Mucosa of descending colon (tissue), 3 donors: ENCODE measurements at regions of chr6 and their contacts with region 1.

Region 1: DNA sequence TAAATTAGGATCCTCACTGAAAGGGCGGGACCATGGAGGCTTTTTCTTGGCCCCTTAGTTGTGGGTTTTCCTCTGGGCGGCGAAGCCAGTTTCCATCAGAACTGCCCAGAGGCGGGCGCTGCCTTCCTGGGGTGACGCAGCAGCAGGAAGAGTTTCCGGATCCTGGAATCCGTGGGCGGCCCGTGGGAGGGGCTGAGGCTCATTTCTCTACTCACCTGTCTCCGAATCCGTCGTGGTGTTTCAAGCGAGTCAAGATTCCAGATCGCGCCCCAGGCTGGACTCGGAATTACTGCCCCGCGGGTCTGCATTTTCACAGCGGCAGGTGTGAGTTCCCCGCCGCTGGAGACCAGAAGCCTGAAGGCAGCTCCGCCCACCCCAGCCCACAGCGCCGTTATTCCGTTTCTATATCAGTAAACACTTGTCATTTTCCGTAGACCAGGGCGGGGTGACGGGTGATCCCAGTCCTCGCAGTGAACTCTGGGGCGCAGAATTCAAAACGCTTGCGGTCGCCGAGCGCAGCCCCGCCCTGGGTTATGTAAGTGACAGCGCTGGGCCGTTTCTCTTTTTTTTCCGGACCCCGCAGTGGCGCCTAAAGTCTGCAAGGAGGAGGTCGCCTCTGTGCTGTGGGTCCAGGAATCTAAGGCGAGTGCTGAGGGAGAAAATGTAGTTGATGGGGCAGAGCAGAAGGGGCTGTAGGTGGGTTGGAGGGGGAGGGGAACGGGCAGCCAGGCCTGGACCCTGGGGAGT is 27.2 kb upstream of the POU5F1 start:
- DNase-seq: peak; percentile 92 to 97 (median 97)
- ATAC-seq: peak; percentile 85
- H3K4me3 ChIP-seq: peak overlapping the region; percentile 40
- H3K4me1 ChIP-seq: peaks cover 23% of the 10 kb centered on the region
- CTCF ChIP-seq: no peak

Region 2: DNA sequence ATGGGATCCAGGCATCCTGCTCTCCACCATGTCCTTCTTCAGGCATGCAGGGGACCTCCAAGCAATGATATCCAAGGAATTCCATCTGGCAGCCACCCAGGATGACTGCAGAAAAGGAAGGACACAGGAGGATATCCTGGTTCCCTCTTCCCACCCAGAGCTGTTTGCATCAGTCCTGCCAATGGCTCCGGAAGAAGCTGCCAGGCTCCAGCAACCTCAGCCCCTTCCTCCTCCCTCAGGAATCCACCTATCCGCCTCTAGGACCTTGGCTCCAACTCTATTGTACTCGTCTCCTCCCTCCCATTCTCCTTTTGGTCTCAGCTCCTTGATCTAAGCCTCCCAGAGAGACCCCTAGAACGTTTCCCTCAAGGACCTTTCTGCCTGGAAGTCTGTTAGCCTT is 58.1 kb before region 1 on chr6:
- intact Hi-C with region 1: loop called (anchors 5 kb)
- DNase-seq: no peak
- ATAC-seq: no peak
- H3K4me3 ChIP-seq: no peak overlapping the region
- H3K4me1 ChIP-seq: peaks cover 23% of the 10 kb centered on the region
- CTCF ChIP-seq: no peak

Region 3: GRCh38 chr6:31441365-31442267 is 243.9 kb after region 1 on chr6:
- intact Hi-C with region 1: no loop called
- DNase-seq: peak; percentile 75 to 93 (median 87)
- ATAC-seq: peak; percentile 96
- H3K4me3 ChIP-seq: no peak overlapping the region
- H3K4me1 ChIP-seq: no peaks in the 10 kb centered on the region
- CTCF ChIP-seq: peak; percentile 74